GM12878 (cell line): ENCODE measurements at regions of chr5 and their contacts with region 1.

Region 1: DNA sequence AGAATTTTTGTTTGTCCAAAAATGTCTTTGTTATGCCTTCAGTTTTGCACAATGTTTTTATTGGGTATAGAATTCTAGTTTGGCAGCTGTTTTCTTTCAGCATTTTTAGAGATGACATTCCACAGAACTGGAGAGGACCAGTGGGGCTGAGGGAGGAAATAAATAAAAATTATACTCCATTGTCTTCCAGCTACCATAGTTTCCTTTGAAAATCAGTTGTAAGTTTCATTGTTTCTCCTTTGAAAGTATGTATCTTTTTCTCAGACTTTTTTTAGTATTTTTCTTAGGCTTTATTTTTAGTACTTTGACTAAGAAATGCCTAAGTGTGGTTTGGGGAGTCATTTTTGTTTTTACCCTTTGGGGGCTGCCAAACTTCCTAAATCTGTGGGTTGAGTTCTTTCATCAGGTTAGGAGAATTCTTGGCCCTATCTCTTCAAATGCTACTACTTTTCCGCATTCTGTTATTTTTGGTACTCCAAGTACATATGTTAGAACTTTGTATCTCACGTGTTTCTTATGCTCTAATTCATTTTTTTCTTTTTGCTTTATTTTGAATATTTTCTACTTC is 15.2 kb upstream of the FBLL1 start:
- DNase-seq: no peak
- ATAC-seq: no peak
- H3K4me3 ChIP-seq: no peak overlapping the region
- H3K27ac ChIP-seq: no peak overlapping the region
- H3K4me1 ChIP-seq: no peaks in the 10 kb centered on the region
- H3K27me3 ChIP-seq: no peaks in the 10 kb centered on the region
- CTCF ChIP-seq: no peak
- EP300 ChIP-seq: no peak
- POLR2A ChIP-seq: no peak
- RAD21 ChIP-seq: no peak

Region 2: GRCh38 chr5:168528521-168529372 is 14.8 kb after region 1 on chr5 and contains the start of gene FBLL1:
- CTCF ChIA-PET with region 1: no interaction called
- POLR2A ChIA-PET with region 1: no interaction called
- RAD21 ChIA-PET with region 1: no interaction called
- SMC1A ChIA-PET with region 1: no interaction called
- in situ Hi-C with region 1: no loop called
- intact Hi-C with region 1: no loop called
- DNase-seq: no peak
- ATAC-seq: no peak
- H3K4me3 ChIP-seq: no peak within 1 kb of the TSS
- H3K27ac ChIP-seq: no peak within 1 kb of the TSS
- H3K4me1 ChIP-seq: no peaks in the 10 kb centered on the region
- H3K27me3 ChIP-seq: peaks cover 0 to 3% of the 10 kb centered on the region in 2 experiments; a peak in 1 of 4 replicates
- CTCF ChIP-seq: no peak
- EP300 ChIP-seq: no peak
- POLR2A ChIP-seq: no peak
- RAD21 ChIP-seq: no peak
- polyA plus RNA-seq, gene FBLL1: 0.04 TPM in 1 of 2 experiments, not detected in the other

Region 3: DNA sequence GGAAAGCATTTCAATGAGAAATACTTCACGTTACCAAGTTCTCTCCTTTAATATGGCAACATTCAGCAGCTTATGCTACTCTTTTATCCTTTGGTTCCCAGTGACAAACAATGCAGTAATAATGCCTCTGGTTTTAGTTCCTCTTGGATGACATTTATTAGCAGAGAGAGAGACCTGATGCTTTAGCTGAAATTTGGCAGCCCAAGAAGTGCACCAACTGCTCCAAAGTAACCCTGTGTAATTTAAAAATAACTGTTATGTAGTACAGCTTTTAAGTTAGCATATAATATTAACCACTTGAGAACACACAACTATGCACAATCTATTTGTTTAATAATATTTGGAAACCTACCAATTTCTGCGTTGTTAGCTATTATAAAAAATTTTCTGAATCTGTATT is 43.4 kb after region 1 on chr5:
- CTCF ChIA-PET with region 1: no interaction called
- POLR2A ChIA-PET with region 1: interaction called, 4 read pairs
- RAD21 ChIA-PET with region 1: no interaction called
- SMC1A ChIA-PET with region 1: no interaction called
- in situ Hi-C with region 1: no loop called
- intact Hi-C with region 1: loop called (anchors 5 kb)
- DNase-seq: no peak
- ATAC-seq: no peak
- H3K4me3 ChIP-seq: no peak overlapping the region
- H3K27ac ChIP-seq: no peak overlapping the region
- H3K4me1 ChIP-seq: no peaks in the 10 kb centered on the region
- H3K27me3 ChIP-seq: no peaks in the 10 kb centered on the region
- CTCF ChIP-seq: no peak
- EP300 ChIP-seq: no peak
- POLR2A ChIP-seq: no peak
- RAD21 ChIP-seq: no peak